ENCODE measurements at regions of chr20 and their contacts with region 1.

Region 1: GRCh38 chr20:1108437-1108920 is 9.9 kb upstream of the PSMF1 start:
- DNase-seq: peak; percentile 70
- H3K4me3 Mint-ChIP-seq: no peak overlapping the region
- H3K27ac Mint-ChIP-seq: no peak overlapping the region
- H3K4me1 Mint-ChIP-seq: peaks cover 2% of the 10 kb centered on the region
- H3K27me3 Mint-ChIP-seq: no peaks in the 10 kb centered on the region

Region 2: DNA sequence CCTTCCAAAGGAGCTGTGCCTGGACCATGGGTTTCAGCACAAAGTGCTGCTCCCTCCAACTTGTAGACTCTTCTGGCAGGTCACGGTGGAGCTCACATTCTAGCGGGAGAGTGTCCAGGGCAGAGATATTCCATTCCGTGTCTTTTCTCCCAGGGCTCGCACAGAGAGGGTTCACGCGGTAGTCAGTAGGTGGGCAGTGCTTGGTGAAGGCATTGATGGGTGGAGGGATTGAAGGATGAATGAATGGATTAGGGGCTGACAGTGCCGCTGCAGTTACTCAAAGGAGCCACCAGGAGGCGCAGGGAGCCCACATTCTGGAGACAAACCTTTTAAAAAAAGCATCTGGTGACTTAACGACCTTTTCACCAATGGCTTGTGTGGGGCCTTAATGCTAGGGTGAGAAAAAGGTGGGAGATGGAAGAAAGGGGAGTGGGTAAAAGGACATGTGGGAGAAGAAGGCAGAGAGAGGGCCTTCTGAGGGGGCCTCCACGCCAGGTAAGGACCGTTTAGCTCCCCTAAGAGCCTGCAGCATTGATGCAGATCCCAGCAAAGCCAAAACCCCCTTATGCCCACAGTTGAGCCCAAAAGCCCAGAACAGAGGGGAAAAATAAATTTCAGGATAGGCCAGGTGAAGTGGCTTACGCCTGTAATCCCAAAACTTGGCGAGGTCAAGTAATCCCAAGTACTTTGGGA is 292.4 kb before region 1 on chr20:
- CTCF ChIA-PET with region 1: interaction called, 21 read pairs
- POLR2A ChIA-PET with region 1: no interaction called
- intact Hi-C with region 1: loop called (anchors 1 kb)
- DNase-seq: peak; percentile 76
- H3K4me3 Mint-ChIP-seq: no peak overlapping the region
- H3K27ac Mint-ChIP-seq: no peak overlapping the region
- H3K4me1 Mint-ChIP-seq: no peaks in the 10 kb centered on the region
- H3K27me3 Mint-ChIP-seq: peaks cover 15% of the 10 kb centered on the region

Region 3: GRCh38 chr20:956330-956951 is 152.0 kb before region 1 on chr20:
- CTCF ChIA-PET with region 1: interaction called, 12 read pairs
- POLR2A ChIA-PET with region 1: interaction called, 4 read pairs
- intact Hi-C with region 1: no loop called
- DNase-seq: peak; percentile 80
- H3K4me3 Mint-ChIP-seq: no peak overlapping the region
- H3K27ac Mint-ChIP-seq: no peak overlapping the region
- H3K4me1 Mint-ChIP-seq: peaks cover 2% of the 10 kb centered on the region
- H3K27me3 Mint-ChIP-seq: peaks cover 34% of the 10 kb centered on the region

Region 4: DNA sequence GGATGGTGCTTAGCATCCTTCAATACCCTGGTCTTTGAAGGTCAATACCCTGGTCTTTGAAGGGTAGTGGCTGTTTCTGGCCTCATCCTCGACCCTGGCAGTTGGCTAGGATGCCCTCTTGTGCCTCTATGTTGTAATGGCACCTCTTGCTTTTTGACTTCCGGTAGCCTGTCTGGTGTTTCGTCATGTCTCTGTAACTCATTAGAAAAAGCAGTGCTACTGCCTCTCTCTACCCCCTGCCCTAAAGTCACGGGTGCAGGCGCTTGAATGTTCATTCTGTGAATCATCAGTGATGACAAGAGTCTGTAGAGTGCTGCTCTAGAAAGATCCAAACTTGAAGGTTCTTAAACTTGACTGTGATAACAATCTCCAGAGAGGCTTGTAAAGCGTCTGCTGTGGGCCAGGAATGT is 134.7 kb before region 1 on chr20:
- CTCF ChIA-PET with region 1: interaction called, 6 read pairs
- POLR2A ChIA-PET with region 1: no interaction called
- intact Hi-C with region 1: loop called (anchors 5 kb)
- DNase-seq: peak; percentile 54
- H3K4me3 Mint-ChIP-seq: no peak overlapping the region
- H3K27ac Mint-ChIP-seq: no peak overlapping the region
- H3K4me1 Mint-ChIP-seq: peaks cover 2% of the 10 kb centered on the region
- H3K27me3 Mint-ChIP-seq: no peaks in the 10 kb centered on the region

Region 5: DNA sequence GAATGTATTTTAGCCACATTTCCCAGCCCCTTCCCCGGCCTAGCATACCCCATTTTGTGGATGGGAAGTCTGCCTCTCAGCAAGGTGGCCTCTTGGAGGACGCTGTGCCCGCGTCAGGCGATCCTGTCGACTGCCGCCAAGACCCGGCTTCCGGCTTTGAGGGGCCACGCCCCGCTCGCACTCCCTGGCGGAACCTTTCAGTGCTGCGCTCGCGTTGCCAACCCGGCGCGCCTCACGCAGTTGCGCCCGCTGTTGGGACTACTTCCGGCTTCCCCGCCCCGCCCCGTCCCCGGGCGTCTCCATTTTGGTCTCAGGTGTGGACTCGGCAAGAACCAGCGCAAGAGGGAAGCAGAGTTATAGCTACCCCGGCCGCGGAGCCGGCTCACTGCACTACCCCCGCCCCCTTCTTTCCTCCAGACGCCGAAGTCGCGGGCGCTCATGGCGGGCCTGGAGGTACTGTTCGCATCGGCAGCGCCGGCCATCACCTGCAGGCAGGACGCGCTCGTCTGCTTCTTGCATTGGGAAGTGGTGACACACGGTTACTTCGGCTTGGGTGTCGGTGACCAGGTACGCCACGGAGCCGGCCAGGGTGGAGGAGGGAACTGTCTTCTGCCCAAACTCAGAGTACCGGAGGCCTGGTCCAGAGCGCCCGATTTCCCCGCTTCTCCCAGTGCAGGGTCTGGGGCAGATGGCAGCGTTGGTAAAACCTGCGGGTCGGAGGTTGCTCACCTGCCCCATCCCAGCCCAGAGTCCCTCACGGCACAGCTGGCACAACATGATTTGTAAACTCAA is 10.1 kb after region 1 on chr20 and contains the start of gene PSMF1:
- CTCF ChIA-PET with region 1: interaction called, 12 read pairs
- POLR2A ChIA-PET with region 1: no interaction called
- intact Hi-C with region 1: no loop called
- DNase-seq: peak; percentile 97
- H3K4me3 Mint-ChIP-seq: peak within 1 kb of the TSS; percentile 89
- H3K27ac Mint-ChIP-seq: peak within 1 kb of the TSS; percentile 84
- H3K4me1 Mint-ChIP-seq: peaks cover 57% of the 10 kb centered on the region
- H3K27me3 Mint-ChIP-seq: no peaks in the 10 kb centered on the region
- total RNA-seq, gene PSMF1: 140 to 149 TPM

Region 6: GRCh38 chr20:1185790-1186334 is 77.4 kb after region 1 on chr20:
- CTCF ChIA-PET with region 1: interaction called, 3 read pairs
- POLR2A ChIA-PET with region 1: no interaction called
- intact Hi-C with region 1: loop called (anchors 1 kb)
- DNase-seq: peak; percentile 72
- H3K4me3 Mint-ChIP-seq: peak overlapping the region; percentile 23
- H3K27ac Mint-ChIP-seq: no peak overlapping the region
- H3K4me1 Mint-ChIP-seq: peaks cover 7% of the 10 kb centered on the region
- H3K27me3 Mint-ChIP-seq: peaks cover 24% of the 10 kb centered on the region

Region 7: DNA sequence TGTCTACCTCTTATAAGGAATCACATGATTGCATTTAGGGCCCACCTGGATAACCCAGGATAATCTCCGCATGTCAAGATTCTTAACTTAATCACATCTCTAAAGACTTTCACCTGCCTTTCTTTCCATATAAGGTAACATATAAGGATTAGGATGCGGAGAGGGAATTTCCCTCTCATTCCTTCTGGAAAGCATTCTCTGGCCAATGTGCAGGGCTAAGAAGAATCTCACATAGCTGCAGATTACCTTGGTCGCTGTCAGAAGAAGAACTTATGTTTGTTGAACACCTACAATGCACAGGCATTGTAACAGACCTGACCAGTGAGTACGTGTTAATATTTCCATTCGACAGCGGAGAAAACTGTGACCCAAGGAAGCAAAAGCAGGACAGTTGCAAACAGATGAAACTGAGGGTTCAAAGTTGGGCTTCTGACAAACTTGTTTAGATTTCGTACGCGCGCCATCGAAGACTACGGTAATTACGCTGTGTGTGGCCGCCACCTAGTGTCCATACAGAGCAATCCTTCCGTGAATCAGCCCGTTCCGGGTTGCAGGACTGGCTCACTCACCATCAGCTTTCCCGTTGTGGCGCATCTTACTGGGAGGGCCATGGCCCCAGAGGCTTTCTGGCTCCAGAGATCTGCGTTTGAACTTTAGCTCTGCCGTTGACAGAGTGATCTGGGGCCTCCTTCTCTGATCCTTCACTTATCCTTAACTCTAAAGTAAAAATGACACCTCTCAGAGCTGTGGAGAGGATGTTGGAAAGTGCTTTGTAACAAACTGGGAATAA is 104.3 kb after region 1 on chr20:
- CTCF ChIA-PET with region 1: interaction called, 45 read pairs
- POLR2A ChIA-PET with region 1: no interaction called
- intact Hi-C with region 1: loop called (anchors 1 kb)
- DNase-seq: peak; percentile 84
- H3K4me3 Mint-ChIP-seq: no peak overlapping the region
- H3K27ac Mint-ChIP-seq: no peak overlapping the region
- H3K4me1 Mint-ChIP-seq: peaks cover 33% of the 10 kb centered on the region
- H3K27me3 Mint-ChIP-seq: no peaks in the 10 kb centered on the region

Measured in activated CD4-positive, alpha-beta memory T cell treated with anti-CD3 and anti-CD28 coated beads for 36 hours (primary cell).